Activated CD8-positive, alpha-beta memory T cell treated with anti-CD3 and anti-CD28 coated beads, Interleukin-2, amount 10 ng/mL, durations not matched to agents 7 days and 5 days (primary cell): ENCODE measurements at regions of chr7 and their contacts with region 1.

Region 1: GRCh38 chr7:8125680-8126444 is 136.1 kb downstream of the ICA1 start:
- DNase-seq: peak; percentile 92
- ATAC-seq: peak; percentile 90
- H3K4me3 Mint-ChIP-seq: peak overlapping the region; percentile 45
- H3K27ac Mint-ChIP-seq: peak overlapping the region; percentile 97
- H3K4me1 Mint-ChIP-seq: peaks cover 82% of the 10 kb centered on the region
- H3K27me3 Mint-ChIP-seq: peaks cover 3% of the 10 kb centered on the region

Region 2: DNA sequence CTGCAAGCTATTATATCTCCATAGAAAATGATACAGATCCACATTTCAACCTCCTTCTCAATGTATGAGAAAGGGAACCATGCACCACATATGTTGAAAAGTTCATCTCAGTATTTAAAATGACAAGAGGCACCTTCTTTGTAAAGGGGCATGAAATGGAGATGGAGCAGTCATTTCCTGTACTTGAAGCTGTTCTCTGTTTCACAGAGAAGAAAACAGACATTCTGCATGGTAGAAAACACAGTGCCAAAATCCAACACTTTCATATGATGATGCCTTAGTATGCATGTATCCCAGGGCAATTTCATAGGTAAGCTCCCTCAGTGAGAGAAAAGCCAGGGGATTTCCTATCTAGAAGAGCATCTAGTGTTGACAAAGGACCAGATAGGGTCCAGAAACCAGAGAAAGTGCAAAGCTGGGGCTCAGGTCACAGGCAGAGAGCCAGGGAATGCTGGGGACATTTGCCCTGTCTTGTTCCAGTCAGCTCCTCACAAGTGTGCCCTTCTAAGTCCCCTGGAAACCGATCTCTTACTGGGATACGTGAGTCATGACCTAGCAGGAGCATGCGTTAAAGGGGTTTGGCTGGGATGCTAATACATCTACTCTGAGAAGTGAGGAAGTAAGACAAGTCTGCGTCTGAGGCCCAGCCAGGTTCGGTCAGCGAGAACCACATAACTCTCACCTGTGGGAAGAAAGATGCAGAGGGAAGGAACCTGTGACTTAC is 17.5 kb after region 1 on chr7:
- CTCF ChIA-PET with region 1: no interaction called
- DNase-seq: no peak
- ATAC-seq: peak; percentile 36
- H3K4me3 Mint-ChIP-seq: no peak overlapping the region
- H3K27ac Mint-ChIP-seq: no peak overlapping the region
- H3K4me1 Mint-ChIP-seq: peaks cover 12% of the 10 kb centered on the region
- H3K27me3 Mint-ChIP-seq: no peaks in the 10 kb centered on the region

Region 3: GRCh38 chr7:8176370-8177081 is 50.7 kb after region 1 on chr7:
- CTCF ChIA-PET with region 1: interaction called, 10 read pairs
- DNase-seq: peak; percentile 89
- ATAC-seq: peak; percentile 91
- H3K4me3 Mint-ChIP-seq: peak overlapping the region; percentile 58
- H3K27ac Mint-ChIP-seq: peak overlapping the region; percentile 97
- H3K4me1 Mint-ChIP-seq: peaks cover 51% of the 10 kb centered on the region
- H3K27me3 Mint-ChIP-seq: no peaks in the 10 kb centered on the region

Region 4: DNA sequence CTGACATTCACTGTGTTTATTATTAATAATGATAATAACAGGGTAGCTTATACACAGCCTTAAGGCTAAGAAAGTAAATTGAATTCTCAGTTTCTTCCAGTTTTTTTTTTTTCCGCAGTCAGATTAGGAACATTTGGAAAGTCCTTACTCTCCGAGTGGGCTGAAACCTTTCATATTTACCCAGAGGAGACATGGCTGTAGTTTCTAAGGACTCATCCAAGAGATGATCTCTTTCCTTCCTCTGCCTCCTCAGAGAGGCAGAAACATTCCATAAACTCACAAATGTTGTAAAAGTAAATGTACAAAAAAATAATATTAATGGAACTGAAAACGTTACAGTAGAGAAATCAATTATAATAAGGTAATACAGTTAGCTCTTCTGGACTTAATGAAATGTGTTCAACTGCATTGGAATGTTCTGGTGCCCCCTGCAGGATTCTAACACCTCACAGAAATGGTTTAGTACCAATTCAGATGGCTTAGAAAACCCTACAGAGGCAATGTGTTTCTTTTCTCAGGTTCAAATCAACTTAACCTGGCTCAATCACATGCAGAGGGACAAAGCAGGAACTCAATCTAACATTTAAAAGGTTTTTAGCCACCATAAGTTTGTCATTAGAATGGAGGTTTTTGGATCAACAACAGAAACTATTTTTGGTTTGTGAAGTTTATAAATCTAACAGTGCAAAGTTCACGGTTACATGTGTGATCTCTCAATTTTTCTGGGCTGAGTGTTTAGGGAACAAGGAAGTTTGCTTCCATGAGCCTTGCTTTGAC is 64.4 kb after region 1 on chr7:
- CTCF ChIA-PET with region 1: interaction called, 22 read pairs
- DNase-seq: peak; percentile 79
- ATAC-seq: peak; percentile 87
- H3K4me3 Mint-ChIP-seq: no peak overlapping the region
- H3K27ac Mint-ChIP-seq: peak overlapping the region; percentile 45
- H3K4me1 Mint-ChIP-seq: peaks cover 31% of the 10 kb centered on the region
- H3K27me3 Mint-ChIP-seq: peaks cover 2% of the 10 kb centered on the region